Activated CD4-positive, alpha-beta T cell treated with anti-CD3 and anti-CD28 coated beads for 36 hours (primary cell): ENCODE measurements at regions of chr14 and their contacts with region 1.

Region 1: DNA sequence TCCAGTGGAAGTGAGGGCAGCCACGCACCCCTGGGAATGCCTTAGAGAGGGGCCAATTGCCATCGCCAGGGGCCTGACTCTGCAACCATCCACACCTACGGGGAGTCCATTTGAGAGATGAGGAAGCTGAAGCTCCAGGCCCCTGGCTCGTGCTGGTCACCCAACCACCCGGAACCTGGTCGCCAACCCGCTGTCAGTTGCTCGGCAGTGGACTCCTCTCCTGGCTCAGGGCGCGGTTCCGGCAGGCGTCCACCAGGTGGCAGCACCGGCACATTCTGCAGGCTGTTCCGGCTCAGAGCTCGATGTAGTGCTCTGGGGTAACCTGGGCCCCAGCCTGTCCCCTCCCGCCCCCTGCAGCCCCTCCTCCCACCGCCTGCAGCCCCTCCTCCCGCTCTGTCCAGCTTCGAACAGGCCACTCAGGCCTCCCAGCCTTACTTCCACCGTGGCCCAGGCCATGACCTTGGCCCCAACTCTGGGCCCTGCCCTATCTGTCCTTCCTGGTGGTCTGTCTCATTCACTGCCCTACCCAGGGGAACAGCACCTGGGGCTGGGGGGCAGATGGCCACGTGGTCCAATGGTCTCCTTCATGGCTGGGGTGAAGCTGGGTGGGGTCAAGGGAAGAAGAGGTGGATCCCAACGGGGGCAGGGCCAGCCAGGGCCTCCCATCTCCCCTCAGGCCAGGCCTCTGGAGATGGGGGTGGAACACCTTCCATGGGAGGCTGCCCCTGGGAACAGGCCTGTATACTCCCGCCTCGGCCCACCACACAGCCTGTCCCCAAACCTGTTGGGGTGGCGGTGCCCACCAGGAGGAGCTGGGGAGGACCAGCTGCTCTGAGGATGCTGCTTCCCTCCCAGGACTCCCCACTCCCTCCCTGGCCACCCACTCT is 15.7 kb downstream of the SIVA1 start:
- DNase-seq: peak; percentile 96
- ATAC-seq: peak; percentile 95
- H3K4me3 Mint-ChIP-seq: no peak overlapping the region
- H3K27ac Mint-ChIP-seq: no peak overlapping the region
- H3K4me1 Mint-ChIP-seq: peaks cover 8% of the 10 kb centered on the region
- H3K27me3 Mint-ChIP-seq: no peaks in the 10 kb centered on the region

Region 2: GRCh38 chr14:104016873-104017650 is 751.6 kb before region 1 on chr14:
- CTCF ChIA-PET with region 1: no interaction called
- POLR2A ChIA-PET with region 1: no interaction called
- intact Hi-C with region 1: no loop called
- DNase-seq: no peak
- ATAC-seq: no peak
- H3K4me3 Mint-ChIP-seq: no peak overlapping the region
- H3K27ac Mint-ChIP-seq: no peak overlapping the region
- H3K4me1 Mint-ChIP-seq: no peaks in the 10 kb centered on the region
- H3K27me3 Mint-ChIP-seq: peaks cover 13% of the 10 kb centered on the region

Region 3: DNA sequence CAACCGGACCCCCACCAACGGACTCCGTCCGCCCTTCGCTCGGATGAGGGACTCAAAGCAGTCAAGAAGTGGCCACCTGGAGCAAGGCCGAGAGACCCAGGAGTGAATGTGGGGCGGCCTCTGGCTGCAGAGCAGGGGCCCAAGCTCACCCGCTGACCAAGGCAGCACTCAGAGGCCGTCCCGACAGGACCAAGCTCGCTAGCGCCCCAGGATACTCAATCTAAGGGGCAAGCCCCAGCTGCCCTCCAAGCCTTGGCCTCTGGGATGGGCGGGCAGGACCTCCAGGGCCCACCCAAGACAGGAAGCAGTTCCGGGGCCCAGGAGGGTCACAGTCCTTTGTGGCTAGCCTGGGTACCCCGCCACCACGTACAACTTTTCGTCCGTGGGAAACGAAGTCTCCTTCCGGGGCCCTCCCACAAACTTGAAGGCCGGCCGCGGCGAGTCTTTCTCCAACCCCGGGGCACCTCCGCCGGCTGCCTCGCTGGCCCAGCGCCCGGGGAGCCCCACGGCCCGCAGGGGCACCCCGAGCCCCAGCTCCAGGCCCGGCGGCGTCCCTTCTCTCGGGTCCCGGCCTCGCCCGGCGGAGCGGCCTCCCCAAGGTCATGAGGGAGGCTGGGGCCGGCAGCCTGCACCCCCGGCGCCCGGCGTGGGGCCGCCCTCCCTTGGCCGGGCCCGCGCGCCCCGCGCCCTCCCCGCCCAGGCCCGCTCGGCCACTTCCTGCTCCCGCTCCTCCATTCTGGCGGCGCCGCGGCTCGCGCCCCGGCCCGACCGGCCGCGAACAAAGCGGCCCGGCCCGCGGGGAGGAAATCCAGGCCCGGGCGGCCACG is 26.2 kb after region 1 on chr14:
- CTCF ChIA-PET with region 1: interaction called, 11 read pairs
- POLR2A ChIA-PET with region 1: no interaction called
- intact Hi-C with region 1: loop called in 1 of 2 experiments (anchors 2 kb)
- DNase-seq: peak; percentile 48
- ATAC-seq: peak; percentile 44
- H3K4me3 Mint-ChIP-seq: peak overlapping the region; percentile 83
- H3K27ac Mint-ChIP-seq: peak overlapping the region; percentile 72
- H3K4me1 Mint-ChIP-seq: peaks cover 34% of the 10 kb centered on the region
- H3K27me3 Mint-ChIP-seq: no peaks in the 10 kb centered on the region

Region 4: GRCh38 chr14:104800015-104800770 is 31.5 kb after region 1 on chr14:
- CTCF ChIA-PET with region 1: interaction called, 5 read pairs
- POLR2A ChIA-PET with region 1: no interaction called
- intact Hi-C with region 1: loop called in 1 of 2 experiments (anchors 2 kb)
- DNase-seq: peak; percentile 88
- ATAC-seq: peak; percentile 77
- H3K4me3 Mint-ChIP-seq: peak overlapping the region; percentile 49
- H3K27ac Mint-ChIP-seq: no peak overlapping the region
- H3K4me1 Mint-ChIP-seq: peaks cover 22% of the 10 kb centered on the region
- H3K27me3 Mint-ChIP-seq: no peaks in the 10 kb centered on the region

Region 5: GRCh38 chr14:104865644-104866441 is 97.2 kb after region 1 on chr14:
- CTCF ChIA-PET with region 1: interaction called, 8 read pairs
- POLR2A ChIA-PET with region 1: no interaction called
- intact Hi-C with region 1: loop called in 1 of 2 experiments (anchors 1 kb)
- DNase-seq: peak; percentile 62
- ATAC-seq: peak; percentile 57
- H3K4me3 Mint-ChIP-seq: peak overlapping the region; percentile 60
- H3K27ac Mint-ChIP-seq: no peak overlapping the region
- H3K4me1 Mint-ChIP-seq: peaks cover 2% of the 10 kb centered on the region
- H3K27me3 Mint-ChIP-seq: peaks cover 7% of the 10 kb centered on the region